GM12878 (cell line): ENCODE measurements at regions of chr13 and their contacts with region 1.

Region 1: GRCh38 chr13:110412132-110412914 is 105.2 kb downstream of the COL4A2 start:
- DNase-seq: peak; percentile 40
- ATAC-seq: peak; percentile 87
- H3K4me3 ChIP-seq: no peak overlapping the region
- H3K27ac ChIP-seq: no peak overlapping the region
- H3K4me1 ChIP-seq: peaks cover 4% of the 10 kb centered on the region
- H3K27me3 ChIP-seq: no peaks in the 10 kb centered on the region
- CTCF ChIP-seq: peak; percentile 89 to 94 (median 93)
- EP300 ChIP-seq: no peak
- POLR2A ChIP-seq: no peak
- RAD21 ChIP-seq: peak; percentile 85

Region 2: GRCh38 chr13:110218581-110219201 is 193.6 kb before region 1 on chr13:
- CTCF ChIA-PET with region 1: interaction called, 80 read pairs
- POLR2A ChIA-PET with region 1: no interaction called
- RAD21 ChIA-PET with region 1: interaction called, 17 read pairs
- SMC1A ChIA-PET with region 1: interaction called, 34 read pairs
- in situ Hi-C with region 1: loop called (anchors 5 kb)
- intact Hi-C with region 1: loop called (anchors 1 kb)
- DNase-seq: no peak
- ATAC-seq: no peak
- H3K4me3 ChIP-seq: no peak overlapping the region
- H3K27ac ChIP-seq: no peak overlapping the region
- H3K4me1 ChIP-seq: no peaks in the 10 kb centered on the region
- H3K27me3 ChIP-seq: peaks cover 0 to 3% of the 10 kb centered on the region in 2 experiments; a peak in 2 of 4 replicates
- CTCF ChIP-seq: no peak
- EP300 ChIP-seq: no peak
- POLR2A ChIP-seq: no peak
- RAD21 ChIP-seq: no peak

Region 3: DNA sequence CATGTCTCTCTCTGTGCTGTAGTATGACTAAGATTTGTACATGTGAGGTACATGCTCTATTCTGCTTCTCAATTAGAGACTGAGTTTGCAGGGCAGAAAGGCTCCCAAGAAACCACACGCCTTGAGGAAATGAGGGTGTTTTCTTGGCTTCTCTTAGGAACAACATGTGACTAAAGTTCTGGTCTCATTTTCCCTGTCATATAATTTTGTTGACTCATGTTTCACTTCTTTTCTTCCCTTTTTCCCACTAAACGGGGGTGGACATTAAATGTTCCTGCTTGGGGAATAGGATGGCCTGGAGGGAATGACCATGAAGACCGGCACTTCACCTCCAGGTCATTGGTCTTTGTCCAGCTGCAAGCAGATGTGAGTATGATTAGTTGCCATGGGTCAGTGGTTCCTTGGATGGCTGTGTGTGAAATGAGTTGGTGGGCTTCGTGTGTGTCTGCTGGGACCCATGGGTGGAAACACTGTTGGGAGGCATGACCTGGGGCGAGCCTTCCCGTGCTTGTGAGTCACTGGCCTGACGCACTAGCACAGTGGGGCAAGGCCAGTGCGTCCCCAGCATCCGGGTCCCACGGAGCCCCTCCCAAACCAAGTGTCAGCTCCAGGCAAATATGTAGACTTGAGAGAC is 161.9 kb before region 1 on chr13:
- CTCF ChIA-PET with region 1: interaction called, 13 read pairs
- POLR2A ChIA-PET with region 1: no interaction called
- RAD21 ChIA-PET with region 1: interaction called, 9 read pairs
- SMC1A ChIA-PET with region 1: interaction called, 10 read pairs
- in situ Hi-C with region 1: no loop called
- intact Hi-C with region 1: no loop called
- DNase-seq: no peak
- ATAC-seq: peak; percentile 30; the same call in 1 of the 3 replicates
- H3K4me3 ChIP-seq: no peak overlapping the region
- H3K27ac ChIP-seq: no peak overlapping the region
- H3K4me1 ChIP-seq: no peaks in the 10 kb centered on the region
- H3K27me3 ChIP-seq: no peaks in the 10 kb centered on the region
- CTCF ChIP-seq: no peak
- EP300 ChIP-seq: no peak
- POLR2A ChIP-seq: no peak
- RAD21 ChIP-seq: no peak

Region 4: GRCh38 chr13:110361365-110361911 is 50.9 kb before region 1 on chr13:
- CTCF ChIA-PET with region 1: interaction called, 19 read pairs
- POLR2A ChIA-PET with region 1: interaction called, 5 read pairs
- RAD21 ChIA-PET with region 1: interaction called, 6 read pairs
- SMC1A ChIA-PET with region 1: interaction called, 11 read pairs
- in situ Hi-C with region 1: no loop called
- intact Hi-C with region 1: no loop called
- DNase-seq: no peak
- ATAC-seq: peak; percentile 46
- H3K4me3 ChIP-seq: no peak overlapping the region
- H3K27ac ChIP-seq: no peak overlapping the region
- H3K4me1 ChIP-seq: no peaks in the 10 kb centered on the region
- H3K27me3 ChIP-seq: no peaks in the 10 kb centered on the region
- CTCF ChIP-seq: no peak
- EP300 ChIP-seq: no peak
- POLR2A ChIP-seq: no peak
- RAD21 ChIP-seq: no peak

Region 5: GRCh38 chr13:110397436-110398115 is 14.7 kb before region 1 on chr13:
- CTCF ChIA-PET with region 1: interaction called, 19 read pairs
- POLR2A ChIA-PET with region 1: no interaction called
- RAD21 ChIA-PET with region 1: interaction called, 22 read pairs
- SMC1A ChIA-PET with region 1: interaction called, 11 read pairs
- in situ Hi-C with region 1: no loop called
- intact Hi-C with region 1: no loop called
- DNase-seq: no peak
- ATAC-seq: no peak
- H3K4me3 ChIP-seq: no peak overlapping the region
- H3K27ac ChIP-seq: no peak overlapping the region
- H3K4me1 ChIP-seq: no peaks in the 10 kb centered on the region
- H3K27me3 ChIP-seq: no peaks in the 10 kb centered on the region
- CTCF ChIP-seq: no peak
- EP300 ChIP-seq: no peak
- POLR2A ChIP-seq: no peak
- RAD21 ChIP-seq: no peak

Region 6: DNA sequence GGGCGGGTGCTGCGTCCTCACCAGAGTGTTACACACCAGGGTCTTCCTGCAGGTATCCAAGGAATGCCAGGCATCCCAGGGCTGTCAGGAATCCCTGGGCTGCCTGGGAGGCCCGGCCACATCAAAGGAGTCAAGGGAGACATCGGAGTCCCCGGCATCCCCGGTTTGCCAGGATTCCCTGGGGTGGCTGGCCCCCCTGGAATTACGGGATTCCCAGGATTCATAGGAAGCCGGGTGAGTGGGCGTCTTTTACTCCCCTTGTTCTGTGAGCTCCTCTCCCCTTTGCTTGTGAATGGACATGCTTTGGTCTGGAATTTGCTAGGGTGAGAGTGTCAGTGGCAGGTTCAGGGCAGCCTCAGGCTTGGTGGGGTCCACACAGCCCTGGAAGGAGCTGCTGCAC is 73.3 kb after region 1 on chr13:
- CTCF ChIA-PET with region 1: no interaction called
- POLR2A ChIA-PET with region 1: no interaction called
- RAD21 ChIA-PET with region 1: no interaction called
- SMC1A ChIA-PET with region 1: no interaction called
- in situ Hi-C with region 1: no loop called
- intact Hi-C with region 1: no loop called
- DNase-seq: no peak
- ATAC-seq: no peak
- H3K4me3 ChIP-seq: no peak overlapping the region
- H3K27ac ChIP-seq: no peak overlapping the region
- H3K4me1 ChIP-seq: no peaks in the 10 kb centered on the region
- H3K27me3 ChIP-seq: peaks cover 1 to 8% of the 10 kb centered on the region in 2 experiments; a peak in 3 of 4 replicates
- CTCF ChIP-seq: no peak
- EP300 ChIP-seq: no peak
- POLR2A ChIP-seq: no peak
- RAD21 ChIP-seq: no peak